ENCODE measurements at regions of chr4 and their contacts with region 1.

Region 1: GRCh38 chr4:153432968-153433753 is 33.0 kb upstream of the TMEM131L start:
- DNase-seq: peak; percentile 72 to 79 (median 77)
- H3K4me3 ChIP-seq: peak overlapping the region; percentile 59
- H3K4me3 Mint-ChIP-seq: peak overlapping the region; percentile 84 to 95 (median 88)
- H3K27ac ChIP-seq: peak overlapping the region; percentile 55
- H3K27ac Mint-ChIP-seq: peak overlapping the region; percentile 87 to 97 (median 94)
- H3K4me1 ChIP-seq: peaks cover 56% of the 10 kb centered on the region
- H3K4me1 Mint-ChIP-seq: peaks cover 36 to 68% (median 50%) of the 10 kb centered on the region in 4 donors
- H3K27me3 ChIP-seq: no peaks in the 10 kb centered on the region
- H3K27me3 Mint-ChIP-seq: no peaks in the 10 kb centered on the region

Region 2: GRCh38 chr4:153466081-153466948 is 33.2 kb after region 1 on chr4 and contains the start of gene TMEM131L:
- CTCF ChIA-PET with region 1: interaction called, 100 read pairs
- POLR2A ChIA-PET with region 1: interaction called, 48 read pairs
- intact Hi-C with region 1: loop called (anchors 1 kb)
- DNase-seq: peak; percentile 66 to 81 (median 73)
- H3K4me3 ChIP-seq: peak within 1 kb of the TSS; percentile 79 to 86
- H3K4me3 Mint-ChIP-seq: peak within 1 kb of the TSS; percentile 89 to 99 (median 98)
- H3K27ac ChIP-seq: peak within 1 kb of the TSS; percentile 76
- H3K27ac Mint-ChIP-seq: peak within 1 kb of the TSS; percentile 95 to 100 (median 98)
- H3K4me1 ChIP-seq: peaks cover 37% of the 10 kb centered on the region
- H3K4me1 Mint-ChIP-seq: peaks cover 30 to 60% (median 36%) of the 10 kb centered on the region in 4 donors
- H3K27me3 ChIP-seq: no peaks in the 10 kb centered on the region
- H3K27me3 Mint-ChIP-seq: no peaks in the 10 kb centered on the region
- total RNA-seq, gene TMEM131L: 62.5 to 65.6 TPM

Region 3: DNA sequence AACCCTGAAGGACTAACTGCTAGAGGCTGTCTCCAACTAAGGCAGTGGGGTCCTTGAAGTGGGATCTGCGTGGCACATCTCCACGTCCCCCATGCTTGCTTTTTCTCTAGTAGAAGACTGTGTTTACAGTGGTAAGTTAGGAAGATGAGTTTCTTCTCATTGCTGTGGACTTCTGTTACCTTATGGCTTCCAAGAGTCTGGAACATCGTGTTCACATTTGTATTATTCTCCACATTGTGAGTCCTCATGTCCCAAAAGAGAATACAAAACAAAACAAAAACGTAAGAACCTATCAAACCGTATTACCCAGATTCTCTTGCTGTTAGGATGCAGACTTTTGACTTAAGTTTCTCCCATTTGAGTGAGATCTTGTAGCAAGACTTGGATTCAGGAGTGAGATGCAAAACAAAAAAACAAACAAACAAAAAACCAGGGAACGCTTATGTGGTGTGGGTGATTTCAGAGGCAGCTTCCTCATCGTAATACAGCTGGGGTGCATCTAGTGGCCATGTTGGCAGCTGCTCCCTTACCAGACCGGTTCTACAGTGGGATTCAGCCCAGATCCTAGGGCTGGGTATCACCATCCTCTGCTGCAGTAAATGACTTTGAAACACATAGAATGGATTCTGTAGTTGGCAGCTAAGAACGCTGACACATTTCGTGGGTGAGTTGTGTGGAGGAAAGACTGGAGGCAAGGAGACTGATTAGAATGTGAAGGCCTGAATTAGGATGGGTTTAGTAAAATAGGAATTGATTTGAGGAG is 74.3 kb after region 1 on chr4:
- CTCF ChIA-PET with region 1: interaction called, 10 read pairs
- POLR2A ChIA-PET with region 1: no interaction called
- intact Hi-C with region 1: no loop called
- DNase-seq: no peak
- H3K4me3 ChIP-seq: no peak overlapping the region
- H3K4me3 Mint-ChIP-seq: peak overlapping the region in 2 of 8 donors; percentile 30 to 59
- H3K27ac ChIP-seq: no peak overlapping the region
- H3K27ac Mint-ChIP-seq: peak overlapping the region; percentile 9 to 88 (median 49)
- H3K4me1 ChIP-seq: peaks cover 58% of the 10 kb centered on the region
- H3K4me1 Mint-ChIP-seq: peaks cover 52 to 79% (median 62%) of the 10 kb centered on the region in 4 donors
- H3K27me3 ChIP-seq: no peaks in the 10 kb centered on the region
- H3K27me3 Mint-ChIP-seq: no peaks in the 10 kb centered on the region

Region 4: GRCh38 chr4:153535772-153536513 is 102.8 kb after region 1 on chr4:
- CTCF ChIA-PET with region 1: interaction called, 23 read pairs
- POLR2A ChIA-PET with region 1: interaction called, 6 read pairs
- intact Hi-C with region 1: loop called (anchors 1 kb)
- DNase-seq: peak in 4 of 5 donors; percentile 26 to 51 (median 33)
- H3K4me3 ChIP-seq: no peak overlapping the region
- H3K4me3 Mint-ChIP-seq: peak overlapping the region; percentile 48 to 90 (median 76)
- H3K27ac ChIP-seq: peak overlapping the region; percentile 23
- H3K27ac Mint-ChIP-seq: peak overlapping the region; percentile 90 to 96 (median 94)
- H3K4me1 ChIP-seq: peaks cover 96% of the 10 kb centered on the region
- H3K4me1 Mint-ChIP-seq: peaks cover 59 to 93% (median 80%) of the 10 kb centered on the region in 4 donors
- H3K27me3 ChIP-seq: no peaks in the 10 kb centered on the region
- H3K27me3 Mint-ChIP-seq: no peaks in the 10 kb centered on the region

Region 5: DNA sequence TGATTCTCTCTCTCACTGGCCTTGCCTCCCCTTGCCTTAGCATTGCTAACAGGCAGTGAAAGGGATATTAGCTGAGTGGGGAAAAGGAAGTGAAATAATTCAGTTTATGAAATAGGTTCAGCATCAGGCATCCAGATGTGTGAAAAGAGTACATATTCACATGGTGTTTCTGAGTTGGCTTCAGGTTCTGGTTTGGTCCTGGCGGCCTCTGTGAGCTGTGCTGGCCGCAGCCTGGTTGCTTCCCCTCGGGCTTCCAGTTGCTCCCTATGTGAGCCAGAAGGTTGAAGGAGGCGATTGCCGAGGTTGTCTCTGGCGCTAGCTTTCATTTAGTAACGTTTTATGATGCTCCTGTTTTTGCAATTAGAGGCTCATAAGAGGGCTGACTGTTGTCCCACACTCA is 151.9 kb after region 1 on chr4:
- CTCF ChIA-PET with region 1: interaction called, 10 read pairs
- POLR2A ChIA-PET with region 1: no interaction called
- intact Hi-C with region 1: no loop called
- DNase-seq: no peak
- H3K4me3 ChIP-seq: no peak overlapping the region
- H3K4me3 Mint-ChIP-seq: no peak overlapping the region
- H3K27ac ChIP-seq: no peak overlapping the region
- H3K27ac Mint-ChIP-seq: peak overlapping the region in 4 of 7 donors; percentile 18 to 90 (median 40)
- H3K4me1 ChIP-seq: no peaks in the 10 kb centered on the region
- H3K4me1 Mint-ChIP-seq: peaks cover 5 to 16% (median 12%) of the 10 kb centered on the region in 4 donors
- H3K27me3 ChIP-seq: no peaks in the 10 kb centered on the region
- H3K27me3 Mint-ChIP-seq: no peaks in the 10 kb centered on the region

Region 6: DNA sequence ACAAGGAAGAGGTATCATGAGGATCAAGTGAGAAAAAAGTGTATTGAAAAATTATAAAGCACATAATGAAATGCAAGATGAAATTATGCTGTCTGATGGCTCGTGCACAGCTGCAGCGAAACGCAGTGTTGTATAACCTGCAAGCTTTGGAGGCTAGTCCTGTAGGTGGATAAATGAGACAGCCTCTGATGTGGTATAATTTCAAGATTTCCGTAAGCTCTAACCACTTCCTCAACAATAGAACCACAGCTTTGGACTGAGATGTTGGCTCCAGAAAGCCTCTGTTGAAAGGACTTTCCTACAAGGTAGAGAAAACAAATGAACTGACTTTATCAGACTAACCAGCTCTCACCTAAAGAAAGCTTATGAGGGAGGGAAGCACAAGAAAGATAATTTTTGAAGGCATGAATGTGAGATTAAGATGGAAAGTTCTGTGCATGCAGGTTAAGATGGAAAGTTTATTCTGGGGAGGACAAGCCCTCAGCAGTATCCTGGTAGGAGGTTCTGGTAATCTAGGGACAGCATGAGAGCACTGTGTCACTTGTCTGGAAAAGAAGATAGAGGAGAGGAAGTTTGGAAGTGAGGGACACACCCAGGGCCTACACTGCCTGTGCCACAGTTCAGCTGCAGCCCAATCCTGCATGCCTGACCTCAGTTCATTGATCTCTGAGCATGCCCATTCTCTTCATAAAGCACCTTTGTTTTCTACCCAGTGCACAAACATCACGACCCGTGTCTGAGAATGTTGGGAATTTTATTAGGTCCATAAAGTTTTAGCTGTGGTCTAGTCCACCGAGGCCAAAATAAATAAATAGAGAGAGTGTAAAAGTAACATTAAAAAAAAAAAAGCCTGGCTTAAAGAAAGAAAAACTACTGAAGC is 517.2 kb after region 1 on chr4:
- CTCF ChIA-PET with region 1: no interaction called
- POLR2A ChIA-PET with region 1: no interaction called
- intact Hi-C with region 1: no loop called
- DNase-seq: peak in 4 of 5 donors; percentile 33 to 61 (median 52)
- H3K4me3 ChIP-seq: no peak overlapping the region
- H3K4me3 Mint-ChIP-seq: peak overlapping the region in 7 of 8 donors; percentile 2 to 57 (median 29)
- H3K27ac ChIP-seq: no peak overlapping the region
- H3K27ac Mint-ChIP-seq: peak overlapping the region in 3 of 7 donors; percentile 3 to 62 (median 38)
- H3K4me1 ChIP-seq: peaks cover 23% of the 10 kb centered on the region
- H3K4me1 Mint-ChIP-seq: peaks cover 12 to 30% (median 21%) of the 10 kb centered on the region in 4 donors
- H3K27me3 ChIP-seq: no peaks in the 10 kb centered on the region
- H3K27me3 Mint-ChIP-seq: peaks cover 0 to 6% of the 10 kb centered on the region in 2 donors

Measured in CD4-positive, alpha-beta memory T cell (primary cell).